Sigmoid colon (tissue), 7 donors: ENCODE measurements at regions of chr2 and their contacts with region 1.

Region 1: DNA sequence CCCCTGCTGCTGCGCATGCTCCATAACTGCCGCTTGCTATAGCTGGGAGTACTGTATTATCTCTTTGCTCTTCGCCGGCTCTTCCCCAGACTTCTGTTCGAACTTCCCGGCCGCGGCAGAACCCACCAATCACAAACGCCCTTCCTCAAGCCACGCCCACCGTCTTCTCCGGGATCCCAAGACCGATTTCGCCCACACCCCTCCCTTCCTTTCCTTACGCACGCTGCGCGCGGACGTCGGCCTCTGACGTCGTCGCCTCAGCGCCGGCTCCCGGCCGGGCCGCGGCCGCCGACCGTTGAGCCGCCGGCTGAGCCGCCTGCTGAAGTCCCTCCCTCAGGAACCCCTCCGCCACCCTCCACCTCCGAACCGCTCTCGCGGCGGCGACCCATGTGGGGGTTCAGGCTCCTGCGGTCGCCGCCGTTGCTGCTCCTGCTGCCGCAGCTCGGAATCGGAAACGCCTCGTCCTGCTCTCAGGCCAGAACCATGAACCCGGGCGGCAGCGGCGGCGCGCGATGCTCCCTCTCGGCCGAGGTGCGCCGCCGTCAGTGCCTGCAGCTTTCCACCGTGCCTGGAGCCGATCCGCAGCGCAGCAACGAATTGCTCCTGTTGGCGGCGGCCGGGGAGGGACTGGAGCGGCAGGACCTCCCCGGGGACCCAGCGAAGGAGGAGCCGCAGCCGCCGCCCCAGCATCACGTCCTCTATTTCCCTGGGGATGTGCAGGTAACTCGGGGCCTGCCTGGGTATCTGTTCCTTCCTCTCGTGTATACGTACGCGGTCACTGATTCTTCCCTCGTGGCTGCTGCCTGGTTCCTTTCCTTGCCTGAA is at the start of gene C2orf69:
- DNase-seq: peak; percentile 98
- H3K4me3 ChIP-seq: peak within 1 kb of the TSS; percentile 75 to 95 (median 78)
- H3K27ac ChIP-seq: peak within 1 kb of the TSS; percentile 95 to 99 (median 98)
- H3K4me1 ChIP-seq: peaks cover 0 to 29% (median 14%) of the 10 kb centered on the region in 4 donors
- H3K27me3 ChIP-seq: no peaks in the 10 kb centered on the region
- CTCF ChIP-seq: no peak
- EP300 ChIP-seq: no peak
- POLR2A ChIP-seq: peak; percentile 40 to 79
- total RNA-seq, gene C2orf69: 9.6 to 13.6 (median 10.7) TPM

Region 2: DNA sequence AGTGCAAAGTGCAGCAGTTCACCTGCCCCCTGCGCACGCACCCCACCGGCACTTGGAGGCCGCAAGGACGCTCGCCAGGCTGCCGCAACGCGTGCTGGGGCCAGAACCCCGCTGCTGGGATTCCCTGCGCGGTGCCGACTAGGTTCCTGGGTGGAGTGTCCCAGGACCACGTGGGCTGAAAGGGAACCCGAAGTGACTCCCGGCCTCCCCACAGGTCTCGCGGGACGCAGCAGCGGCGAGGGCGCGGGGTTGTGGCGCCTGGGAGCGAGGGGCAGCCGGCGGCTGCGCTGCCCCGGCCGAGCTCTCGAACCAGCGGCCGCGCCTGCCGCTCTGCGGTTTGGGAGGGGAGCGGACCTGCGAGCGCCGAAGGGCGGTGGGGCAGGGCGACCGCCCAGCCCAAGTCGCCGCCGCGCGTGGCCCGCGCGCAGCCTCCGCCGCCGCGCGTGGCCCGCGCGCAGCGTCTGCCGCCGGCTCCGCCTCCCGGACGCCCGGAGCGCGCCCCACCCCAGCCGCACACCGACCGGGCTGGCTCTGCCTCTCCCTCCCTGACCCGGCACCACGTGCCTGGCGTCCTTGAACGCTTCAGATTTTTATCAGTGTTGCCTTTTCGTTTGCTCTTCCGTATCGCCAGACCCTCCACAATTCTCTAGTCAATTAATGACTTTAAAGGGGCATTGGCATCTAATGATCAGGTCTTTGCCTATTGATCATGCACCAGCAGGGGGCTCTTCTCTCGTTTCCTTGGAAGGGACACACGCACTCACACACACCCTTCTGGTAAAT is 60.4 kb before region 1 on chr2 and contains the start of gene FTCDNL1:
- intact Hi-C with region 1: loop called (anchors 1 kb)
- DNase-seq: peak; percentile 79
- H3K4me3 ChIP-seq: peak within 1 kb of the TSS; percentile 53 to 77 (median 70)
- H3K27ac ChIP-seq: peak within 1 kb of the TSS; percentile 66 to 75 (median 73)
- H3K4me1 ChIP-seq: peaks cover 0 to 12% (median 5%) of the 10 kb centered on the region in 4 donors
- H3K27me3 ChIP-seq: no peaks in the 10 kb centered on the region
- CTCF ChIP-seq: peak in 3 of 4 experiments; percentile 22 to 41 (median 23)
- EP300 ChIP-seq: no peak
- POLR2A ChIP-seq: no peak
- total RNA-seq, gene FTCDNL1: 1.7 to 5.0 (median 3.2) TPM

Region 3: GRCh38 chr2:199955339-199956261 is 44.3 kb after region 1 on chr2 and contains the starts of genes MAIP1 and TYW5:
- intact Hi-C with region 1: loop called (anchors 1 kb)
- DNase-seq: peak; percentile 87
- H3K4me3 ChIP-seq: peak within 1 kb of the TSS; percentile 73 to 99 (median 86)
- H3K27ac ChIP-seq: peak within 1 kb of the TSS; percentile 84 to 91 (median 88)
- H3K4me1 ChIP-seq: peaks cover 0 to 40% (median 34%) of the 10 kb centered on the region in 4 donors
- H3K27me3 ChIP-seq: no peaks in the 10 kb centered on the region
- CTCF ChIP-seq: peak in 1 of 4 experiments; percentile 3
- EP300 ChIP-seq: no peak
- POLR2A ChIP-seq: peak; percentile 36 to 65
- total RNA-seq, gene MAIP1: 13.3 to 20.3 (median 17.5) TPM
- total RNA-seq, gene TYW5: 6.1 to 8.0 (median 6.6) TPM

Region 4: DNA sequence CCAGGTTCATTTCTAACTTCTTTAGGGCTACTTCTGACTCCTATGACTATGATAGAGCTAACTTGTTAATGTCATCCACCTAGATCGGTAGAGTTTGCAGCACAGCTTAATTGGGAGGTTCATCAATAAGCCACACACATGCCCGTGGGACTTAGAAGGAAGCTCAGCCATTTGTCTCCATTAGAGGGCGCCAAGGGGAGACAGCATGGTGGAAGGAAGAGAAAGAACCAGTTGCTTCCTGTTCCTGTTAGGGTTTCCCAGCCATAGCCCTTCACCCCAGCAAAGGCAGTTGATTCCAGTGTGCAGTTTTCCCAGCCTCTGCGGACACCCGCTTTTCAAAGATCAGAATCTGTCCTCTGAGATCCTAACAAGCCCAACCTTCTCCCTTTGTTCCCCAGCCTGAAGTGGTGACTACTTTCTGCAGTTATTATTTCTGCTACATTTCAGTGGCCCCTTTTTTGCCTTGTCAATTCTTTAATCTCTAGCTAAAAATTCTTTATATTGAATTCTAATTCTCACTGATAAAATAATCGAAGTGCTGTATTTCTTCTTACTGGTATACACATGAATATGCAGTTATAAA is 74.5 kb after region 1 on chr2:
- intact Hi-C with region 1: no loop called
- DNase-seq: no peak
- H3K4me3 ChIP-seq: no peak overlapping the region
- H3K27ac ChIP-seq: no peak overlapping the region
- H3K4me1 ChIP-seq: no peaks in the 10 kb centered on the region
- H3K27me3 ChIP-seq: no peaks in the 10 kb centered on the region
- CTCF ChIP-seq: peak in 2 of 4 experiments; percentile 31 to 32
- EP300 ChIP-seq: no peak
- POLR2A ChIP-seq: no peak

Region 5: DNA sequence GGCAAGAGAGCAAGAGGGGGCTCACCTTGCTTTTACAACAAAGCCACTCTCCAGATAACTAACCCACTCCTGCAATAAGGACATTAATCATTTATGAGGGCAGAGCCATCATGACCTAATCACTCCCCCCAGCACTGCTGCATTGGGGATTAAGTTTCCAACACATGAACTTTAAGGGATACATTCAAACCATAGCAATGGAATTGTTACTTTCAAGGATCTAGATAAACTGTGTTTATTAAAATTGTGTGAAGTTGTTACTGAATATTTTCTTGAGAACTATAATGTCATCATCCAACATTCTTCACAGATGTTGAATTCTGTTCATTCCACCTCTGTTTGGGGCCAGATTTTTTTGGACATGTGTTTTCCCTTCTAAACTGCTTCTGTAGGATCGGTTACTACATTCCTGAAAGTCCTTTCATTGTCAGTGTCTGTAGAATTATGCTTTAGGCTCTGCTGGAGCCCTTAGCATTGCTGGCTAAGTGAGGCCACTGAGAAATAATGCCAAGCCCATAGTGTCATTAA is 445.7 kb after region 1 on chr2:
- intact Hi-C with region 1: no loop called
- DNase-seq: no peak
- H3K4me3 ChIP-seq: no peak overlapping the region
- H3K27ac ChIP-seq: peak overlapping the region; percentile 25 to 72 (median 48)
- H3K4me1 ChIP-seq: peaks cover 0 to 50% (median 39%) of the 10 kb centered on the region in 4 donors
- H3K27me3 ChIP-seq: no peaks in the 10 kb centered on the region
- CTCF ChIP-seq: no peak
- EP300 ChIP-seq: no peak
- POLR2A ChIP-seq: no peak